ENCODE measurements at regions of chr17 and their contacts with region 1.

Region 1: GRCh38 chr17:71099003-71099714 is 929.8 kb downstream of the KCNJ2 start:
- DNase-seq: no peak
- H3K4me3 ChIP-seq: no peak overlapping the region
- H3K27ac ChIP-seq: no peak overlapping the region
- H3K27me3 ChIP-seq: no peaks in the 10 kb centered on the region
- CTCF ChIP-seq: no peak

Region 2: DNA sequence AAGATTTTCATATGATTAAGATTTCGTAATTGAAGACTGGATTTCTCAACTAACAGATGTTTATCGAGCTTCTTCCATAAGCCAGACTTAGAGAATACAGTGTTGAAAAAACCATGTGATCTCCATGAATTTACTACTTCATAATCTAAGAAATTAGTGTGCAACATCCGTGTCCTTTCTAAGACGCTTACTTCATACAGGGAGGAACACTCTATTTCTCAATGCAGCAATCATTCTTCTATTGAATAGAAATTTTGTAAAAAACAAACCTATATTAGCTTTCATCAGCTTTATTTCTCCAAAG is 16.5 kb after region 1 on chr17:
- CTCF ChIA-PET with region 1: no interaction called
- POLR2A ChIA-PET with region 1: interaction called, 10 read pairs
- DNase-seq: no peak
- H3K4me3 ChIP-seq: no peak overlapping the region
- H3K27ac ChIP-seq: no peak overlapping the region
- H3K27me3 ChIP-seq: no peaks in the 10 kb centered on the region
- CTCF ChIP-seq: no peak

Region 3: GRCh38 chr17:71127416-71127815 is 28.3 kb after region 1 on chr17:
- CTCF ChIA-PET with region 1: no interaction called
- POLR2A ChIA-PET with region 1: no interaction called
- DNase-seq: no peak
- H3K4me3 ChIP-seq: no peak overlapping the region
- H3K27ac ChIP-seq: no peak overlapping the region
- H3K27me3 ChIP-seq: no peaks in the 10 kb centered on the region
- CTCF ChIP-seq: no peak

Measured in AG04450 (cell line).